ENCODE measurements at regions of chr19 and their contacts with region 1.

Region 1: GRCh38 chr19:54189735-54190502 is 539 bp upstream of the MBOAT7 start:
- DNase-seq: peak; percentile 100
- H3K4me3 ChIP-seq: peak overlapping the region; percentile 64 to 94 (median 74)
- H3K27ac ChIP-seq: peak overlapping the region; percentile 95
- H3K4me1 ChIP-seq: peaks cover 17% of the 10 kb centered on the region
- H3K27me3 ChIP-seq: no peaks in the 10 kb centered on the region
- CTCF ChIP-seq: no peak

Region 2: DNA sequence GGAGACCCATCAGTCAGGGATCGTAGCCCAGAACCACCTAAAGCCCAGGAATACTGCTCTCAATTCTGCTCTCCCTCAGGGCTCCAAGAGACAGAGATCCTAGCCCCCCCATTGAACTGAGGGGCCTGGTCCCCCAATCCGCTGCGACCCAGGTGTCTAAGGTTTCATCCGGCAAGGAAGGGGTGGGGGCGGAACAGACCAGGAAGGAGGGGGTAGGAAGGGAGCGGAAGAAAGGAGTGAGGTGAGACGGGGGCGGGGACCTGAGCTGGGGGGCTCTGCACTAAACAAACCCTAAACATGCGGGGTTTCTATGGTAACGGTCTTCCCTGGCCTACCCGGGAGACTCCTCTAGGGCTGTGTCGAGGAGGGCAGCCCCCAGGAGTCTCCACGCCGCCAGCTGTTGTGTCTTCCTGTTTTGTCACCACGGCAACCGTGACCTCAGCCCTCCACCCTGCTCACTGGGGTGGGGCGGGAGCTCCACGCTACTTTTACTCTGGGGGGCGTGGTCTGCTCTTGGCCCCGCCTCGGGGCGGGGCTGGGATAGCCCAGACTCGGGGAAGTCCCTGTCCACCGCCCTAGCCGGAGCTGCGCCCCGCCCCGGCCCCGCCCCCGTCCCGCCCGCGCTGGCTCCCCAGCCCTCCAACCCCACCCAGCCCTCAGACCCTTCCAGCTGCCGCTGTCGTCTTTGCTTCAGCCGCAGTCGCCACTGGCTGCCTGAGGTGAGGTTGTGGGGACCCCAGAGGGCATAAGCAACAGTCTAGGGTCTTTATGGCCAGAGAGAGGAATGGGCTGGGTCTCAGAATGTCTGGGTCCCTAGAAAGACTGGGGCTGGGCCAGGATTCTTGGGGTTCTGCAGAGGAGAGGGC is 322.5 kb before region 1 on chr19 and contains the start of gene MYADM:
- CTCF ChIA-PET with region 1: no interaction called
- dilution Hi-C with region 1: no loop called
- in situ Hi-C with region 1: no loop called
- intact Hi-C with region 1: loop called (anchors 10 kb)
- DNase-seq: peak; percentile 97
- H3K4me3 ChIP-seq: peak within 1 kb of the TSS; percentile 45 to 69 (median 67)
- H3K27ac ChIP-seq: peak within 1 kb of the TSS; percentile 83
- H3K4me1 ChIP-seq: peaks cover 11% of the 10 kb centered on the region
- H3K27me3 ChIP-seq: no peaks in the 10 kb centered on the region
- CTCF ChIP-seq: no peak
- total RNA-seq, gene MYADM: 26.5 to 64.1 TPM

Region 3: GRCh38 chr19:54137086-54137921 is 52.6 kb before region 1 on chr19 and contains the start of gene CNOT3:
- CTCF ChIA-PET with region 1: no interaction called
- dilution Hi-C with region 1: no loop called
- in situ Hi-C with region 1: no loop called
- intact Hi-C with region 1: loop called (anchors 1 kb)
- DNase-seq: peak; percentile 100
- H3K4me3 ChIP-seq: peak within 1 kb of the TSS; percentile 67 to 86 (median 69)
- H3K27ac ChIP-seq: peak within 1 kb of the TSS; percentile 59
- H3K4me1 ChIP-seq: peaks cover 18% of the 10 kb centered on the region
- H3K27me3 ChIP-seq: no peaks in the 10 kb centered on the region
- CTCF ChIP-seq: no peak
- total RNA-seq, gene CNOT3: 4.3 to 54.1 TPM

Region 4: DNA sequence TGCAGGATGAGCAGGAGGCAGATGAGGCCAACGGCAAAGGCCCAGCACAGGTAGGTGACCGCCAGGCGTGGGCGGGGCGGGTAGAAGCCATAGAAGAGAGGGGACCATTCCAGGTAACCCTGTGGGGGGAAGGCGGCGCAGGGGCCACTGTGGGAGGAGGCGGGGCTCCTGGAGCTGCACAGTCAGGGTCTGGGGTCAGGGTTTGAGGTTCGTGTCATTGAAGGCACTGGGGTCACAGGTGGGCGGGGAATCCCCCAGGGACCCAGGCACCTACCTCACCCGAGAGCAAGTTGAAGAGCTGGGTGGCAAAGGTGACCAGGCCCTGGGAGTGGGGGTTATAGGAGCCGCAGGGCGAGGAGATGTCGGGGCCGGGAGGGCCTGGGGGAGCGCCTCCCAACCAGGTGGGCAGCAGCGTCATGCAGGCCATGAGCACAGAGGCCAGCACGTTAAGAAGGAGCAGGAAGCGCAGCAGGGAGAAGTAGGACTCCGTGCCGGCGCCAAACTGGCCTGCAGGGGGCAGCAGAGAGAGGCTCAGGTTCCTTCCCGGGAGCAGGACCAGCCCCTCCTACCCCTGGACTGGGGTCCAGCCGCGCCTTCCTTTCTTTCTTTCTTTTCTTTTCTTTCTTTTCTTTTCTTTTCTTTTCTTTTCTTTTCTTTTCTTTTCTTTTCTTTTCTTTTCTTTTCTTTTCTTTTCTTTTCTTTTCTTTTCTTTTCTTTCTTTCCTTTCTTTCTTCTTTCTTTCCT is 21.6 kb before region 1 on chr19:
- CTCF ChIA-PET with region 1: no interaction called
- dilution Hi-C with region 1: no loop called
- in situ Hi-C with region 1: no loop called
- intact Hi-C with region 1: loop called (anchors 1 kb)
- DNase-seq: peak; percentile 67
- H3K4me3 ChIP-seq: no peak overlapping the region
- H3K27ac ChIP-seq: no peak overlapping the region
- H3K4me1 ChIP-seq: peaks cover 13% of the 10 kb centered on the region
- H3K27me3 ChIP-seq: no peaks in the 10 kb centered on the region
- CTCF ChIP-seq: peak; percentile 81 to 88

Region 5: DNA sequence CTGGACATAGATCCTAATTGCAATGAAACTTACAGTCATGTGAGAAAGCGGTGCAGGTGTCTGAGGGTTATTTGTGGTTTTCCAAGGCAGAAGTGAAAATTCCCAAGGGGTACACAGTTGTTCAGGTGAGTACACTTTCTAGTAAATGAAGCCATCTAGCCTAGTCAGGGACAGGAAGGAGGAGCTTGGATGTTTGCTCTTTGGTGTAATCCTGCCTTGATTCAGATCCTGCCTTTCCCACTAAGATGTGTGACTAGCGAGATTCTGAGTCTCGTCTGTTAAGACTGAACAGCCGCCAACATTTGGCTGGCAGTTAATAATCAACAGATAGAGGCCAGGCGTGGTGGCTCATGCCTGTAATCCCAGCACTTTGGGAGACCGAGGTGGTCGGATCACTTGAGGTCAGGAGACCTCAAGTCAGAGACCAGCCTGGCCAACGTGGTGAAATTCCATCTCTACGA is 13.3 kb after region 1 on chr19:
- CTCF ChIA-PET with region 1: no interaction called
- dilution Hi-C with region 1: no loop called
- in situ Hi-C with region 1: no loop called
- intact Hi-C with region 1: loop called (anchors 1 kb)
- DNase-seq: no peak
- H3K4me3 ChIP-seq: peak overlapping the region in 2 of 3 experiments; percentile 55 to 92
- H3K27ac ChIP-seq: no peak overlapping the region
- H3K4me1 ChIP-seq: peaks cover 36% of the 10 kb centered on the region
- H3K27me3 ChIP-seq: no peaks in the 10 kb centered on the region
- CTCF ChIP-seq: no peak

Region 6: DNA sequence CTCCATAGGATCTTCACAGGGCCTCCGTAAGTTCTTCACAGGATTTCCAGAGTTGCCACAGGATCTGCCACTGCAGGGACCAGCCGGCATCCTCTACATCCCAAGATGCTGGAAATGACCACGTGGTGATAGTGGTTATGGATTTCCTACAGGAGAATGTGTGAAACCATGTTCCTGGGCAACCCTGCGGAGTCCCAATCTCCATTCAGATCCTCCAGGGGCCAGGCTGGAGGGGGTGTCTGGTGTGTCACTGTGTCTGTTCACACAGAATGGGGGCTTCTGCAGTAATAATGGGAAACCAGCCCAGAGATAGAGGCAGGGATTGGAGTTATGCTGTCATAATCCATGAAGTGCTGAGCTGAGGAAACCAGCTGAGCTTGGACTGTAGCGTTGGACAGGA is 44.0 kb after region 1 on chr19:
- CTCF ChIA-PET with region 1: no interaction called
- dilution Hi-C with region 1: no loop called
- in situ Hi-C with region 1: no loop called
- intact Hi-C with region 1: no loop called
- DNase-seq: no peak
- H3K4me3 ChIP-seq: no peak overlapping the region
- H3K27ac ChIP-seq: no peak overlapping the region
- H3K4me1 ChIP-seq: no peaks in the 10 kb centered on the region
- H3K27me3 ChIP-seq: no peaks in the 10 kb centered on the region
- CTCF ChIP-seq: no peak

Region 7: GRCh38 chr19:54463531-54464043 is 273.7 kb after region 1 on chr19 and contains the start of gene LENG9:
- CTCF ChIA-PET with region 1: no interaction called
- dilution Hi-C with region 1: no loop called
- in situ Hi-C with region 1: no loop called
- intact Hi-C with region 1: loop called (anchors 1 kb)
- DNase-seq: peak; percentile 98
- H3K4me3 ChIP-seq: peak within 1 kb of the TSS; percentile 54 to 68 (median 66)
- H3K27ac ChIP-seq: peak within 1 kb of the TSS; percentile 70
- H3K4me1 ChIP-seq: peaks cover 22% of the 10 kb centered on the region
- H3K27me3 ChIP-seq: no peaks in the 10 kb centered on the region
- CTCF ChIP-seq: no peak
- total RNA-seq, gene LENG9: 6.3 to 7.3 TPM

Region 8: DNA sequence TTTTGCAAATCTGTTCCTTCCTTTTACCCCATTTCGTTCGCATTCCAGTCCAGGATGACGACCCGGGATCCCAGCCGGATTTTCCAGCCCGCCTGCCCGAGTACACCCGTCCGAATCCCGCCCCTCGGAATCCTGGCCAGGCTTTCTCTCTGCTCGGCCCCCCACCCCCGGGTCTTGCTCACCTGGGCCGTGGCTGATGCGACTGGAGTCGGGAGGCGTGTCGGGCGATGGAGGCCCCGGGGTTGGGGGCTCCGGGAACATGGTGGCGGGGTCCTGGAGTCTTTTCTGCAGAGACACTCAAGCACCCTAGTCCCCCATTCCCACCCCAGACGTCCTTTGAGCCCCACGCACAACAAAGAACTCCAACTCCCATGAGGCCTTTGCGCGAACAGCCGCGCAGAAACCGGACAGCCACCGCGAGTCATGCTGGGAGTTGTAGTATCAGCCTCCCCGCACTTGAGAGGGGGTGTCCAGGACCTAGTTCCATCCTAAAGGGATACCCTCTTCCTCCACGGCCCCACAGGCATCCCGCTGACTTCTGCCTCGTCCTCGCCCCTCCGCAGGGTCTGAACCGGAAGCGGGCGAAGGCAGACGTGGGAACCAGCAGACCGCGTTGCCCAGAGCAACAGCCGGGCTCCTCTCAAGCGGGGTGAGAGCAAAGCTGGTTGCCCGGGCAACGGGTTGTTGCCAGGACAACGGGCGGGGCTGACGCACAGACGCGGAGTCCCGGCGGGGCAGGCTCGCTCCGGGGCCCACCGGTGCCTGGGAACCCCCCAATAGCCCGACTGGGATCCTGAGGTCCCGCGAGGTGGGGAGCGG is 989.1 kb after region 1 on chr19:
- CTCF ChIA-PET with region 1: no interaction called
- dilution Hi-C with region 1: no loop called
- in situ Hi-C with region 1: no loop called
- intact Hi-C with region 1: loop called (anchors 10 kb)
- DNase-seq: peak; percentile 79
- H3K4me3 ChIP-seq: peak overlapping the region; percentile 13 to 39 (median 29)
- H3K27ac ChIP-seq: peak overlapping the region; percentile 19
- H3K4me1 ChIP-seq: peaks cover 10% of the 10 kb centered on the region
- H3K27me3 ChIP-seq: no peaks in the 10 kb centered on the region
- CTCF ChIP-seq: no peak